ENCODE measurements at regions of chr16 and their contacts with region 1.

Region 1: GRCh38 chr16:22297114-22297878 is at the start of gene POLR3E:
- DNase-seq: peak; percentile 100
- H3K4me3 ChIP-seq: peak within 1 kb of the TSS; percentile 85 to 93 (median 90)
- H3K27ac ChIP-seq: peak within 1 kb of the TSS; percentile 92 to 96 (median 96)
- H3K4me1 ChIP-seq: peaks cover 21 to 40% (median 39%) of the 10 kb centered on the region in 4 donors
- H3K27me3 ChIP-seq: peaks cover 0 to 4% (median 0%) of the 10 kb centered on the region in 4 donors
- CTCF ChIP-seq: peak; percentile 92 to 99 (median 96)
- EP300 ChIP-seq: no peak
- POLR2A ChIP-seq: no peak
- total RNA-seq, gene POLR3E: 39.9 to 50.7 (median 49.0) TPM

Region 2: GRCh38 chr16:21952793-21953540 is 344.3 kb before region 1 on chr16 and contains the start of gene UQCRC2:
- intact Hi-C with region 1: loop called (anchors 5 kb)
- DNase-seq: peak; percentile 97
- H3K4me3 ChIP-seq: peak within 1 kb of the TSS; percentile 71 to 90 (median 80)
- H3K27ac ChIP-seq: peak within 1 kb of the TSS; percentile 87 to 94 (median 93)
- H3K4me1 ChIP-seq: peaks cover 40 to 62% (median 50%) of the 10 kb centered on the region in 4 donors
- H3K27me3 ChIP-seq: no peaks in the 10 kb centered on the region
- CTCF ChIP-seq: no peak
- EP300 ChIP-seq: no peak
- POLR2A ChIP-seq: peak; percentile 50
- total RNA-seq, gene UQCRC2: 147 to 209 (median 186) TPM

Region 3: DNA sequence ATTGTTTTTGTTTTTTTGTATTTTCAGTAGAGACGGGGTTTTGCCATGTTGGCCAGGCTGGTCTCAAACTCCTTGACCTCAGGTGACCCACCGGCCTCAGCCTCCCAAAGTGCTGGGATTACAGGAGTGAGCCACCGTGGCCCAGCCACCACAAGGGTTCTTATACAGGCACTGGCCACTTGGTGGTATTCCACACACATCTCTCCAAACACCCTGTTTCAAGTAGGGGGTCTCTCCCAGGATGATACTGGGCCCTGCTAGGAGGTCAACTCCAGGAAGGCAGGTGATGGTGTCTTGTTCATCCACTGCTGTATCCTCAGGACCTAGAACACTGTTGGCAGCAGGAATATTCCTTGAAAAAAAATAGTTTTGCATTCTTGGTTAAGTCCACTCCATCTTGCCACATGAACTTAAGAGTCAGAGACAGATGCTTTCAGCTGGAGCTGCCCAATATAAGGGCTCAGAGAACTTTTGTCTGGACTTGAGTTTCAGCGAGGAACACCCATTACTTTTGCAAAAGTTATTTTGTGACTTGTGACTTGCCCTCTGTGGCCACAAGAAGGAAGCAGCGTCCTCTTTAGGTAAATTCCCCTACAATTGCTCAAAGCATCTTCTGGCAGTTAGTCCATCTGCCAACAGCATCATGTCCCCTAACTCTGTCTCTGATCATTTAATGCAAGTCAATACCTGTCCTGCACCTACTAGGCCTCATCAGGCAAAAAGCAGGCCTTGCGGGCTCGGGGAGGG is 98.6 kb before region 1 on chr16:
- intact Hi-C with region 1: loop called (anchors 2 kb)
- DNase-seq: no peak
- H3K4me3 ChIP-seq: no peak overlapping the region
- H3K27ac ChIP-seq: peak overlapping the region; percentile 77 to 85 (median 83)
- H3K4me1 ChIP-seq: peaks cover 5 to 28% (median 26%) of the 10 kb centered on the region in 4 donors
- H3K27me3 ChIP-seq: no peaks in the 10 kb centered on the region
- CTCF ChIP-seq: no peak
- EP300 ChIP-seq: no peak
- POLR2A ChIP-seq: no peak

Measured in esophagus muscularis mucosa (tissue), 4 donors.